AG04449 (cell line): ENCODE measurements at regions of chr9 and their contacts with region 1.

Region 1: DNA sequence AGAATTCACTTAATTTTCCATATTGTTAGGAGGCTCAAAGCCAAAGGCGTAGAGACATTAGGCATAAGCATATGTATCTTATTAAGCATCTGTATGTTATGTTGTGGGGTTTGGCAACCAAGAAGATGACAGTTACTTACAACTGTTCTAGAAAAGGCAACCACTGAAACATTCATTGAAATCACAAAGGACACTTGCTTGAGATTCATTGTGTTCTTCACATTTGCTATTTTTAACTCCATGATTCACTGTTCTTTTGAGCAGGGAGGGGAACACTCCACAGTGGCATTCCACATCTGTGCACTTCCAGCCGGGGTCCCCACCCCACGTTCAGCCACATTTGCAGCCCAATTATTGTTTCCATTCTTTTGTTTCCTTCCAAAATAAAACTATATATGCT is 107.1 kb downstream of the PALM2AKAP2 start:
- DNase-seq: no peak
- H3K4me3 ChIP-seq: no peak overlapping the region
- CTCF ChIP-seq: no peak

Region 2: GRCh38 chr9:109422641-109423040 is 464.4 kb before region 1 on chr9:
- CTCF ChIA-PET with region 1: no interaction called
- POLR2A ChIA-PET with region 1: no interaction called
- DNase-seq: no peak
- H3K4me3 ChIP-seq: no peak overlapping the region
- CTCF ChIP-seq: no peak

Region 3: DNA sequence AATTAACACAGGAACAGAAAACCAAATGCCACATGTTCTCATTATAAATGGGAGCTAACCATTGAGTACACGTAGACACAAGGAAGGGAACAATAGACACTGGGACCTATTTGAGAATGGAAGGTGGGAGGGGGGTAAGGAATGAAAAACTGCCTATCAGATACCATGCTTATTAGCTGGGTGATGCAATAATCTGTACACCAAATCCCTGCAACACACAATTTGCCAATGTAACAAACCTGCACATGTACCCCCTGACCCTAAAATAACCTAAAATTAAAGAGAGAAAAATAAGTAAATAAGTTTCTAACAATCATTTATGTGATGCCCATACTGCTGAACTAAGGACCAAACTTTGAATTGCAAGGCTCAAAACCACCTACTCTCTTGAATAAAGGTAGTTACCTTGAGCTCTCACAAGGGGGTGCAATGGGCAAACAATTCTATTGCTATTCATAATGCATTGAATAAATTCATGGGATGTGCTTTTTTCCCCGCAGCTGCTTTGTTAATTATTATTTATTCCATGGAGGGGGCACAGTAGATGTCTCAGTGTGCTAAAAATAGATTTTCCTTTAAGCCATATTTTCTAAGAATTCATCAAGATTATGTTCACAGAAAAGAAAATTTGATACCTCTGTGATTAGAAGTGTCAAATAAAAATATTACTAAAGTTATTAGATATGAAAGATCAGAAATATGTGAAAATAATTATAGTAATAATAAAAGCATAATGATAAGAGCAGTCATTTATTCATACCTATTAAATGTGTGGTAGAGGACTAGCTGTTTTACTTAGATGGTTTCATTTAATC is 312.8 kb before region 1 on chr9:
- CTCF ChIA-PET with region 1: interaction called, 10 read pairs
- POLR2A ChIA-PET with region 1: no interaction called
- DNase-seq: peak; percentile 3
- H3K4me3 ChIP-seq: no peak overlapping the region
- CTCF ChIP-seq: peak; percentile 62

Region 4: GRCh38 chr9:109868207-109868606 is 18.9 kb before region 1 on chr9:
- CTCF ChIA-PET with region 1: interaction called, 18 read pairs
- POLR2A ChIA-PET with region 1: no interaction called
- DNase-seq: no peak
- H3K4me3 ChIP-seq: no peak overlapping the region
- CTCF ChIP-seq: no peak